PC-3 (cell line): ENCODE measurements at regions of chr6 and their contacts with region 1.

Region 1: GRCh38 chr6:32118782-32119628 is 9.0 kb downstream of the ATF6B start:
- DNase-seq: peak; percentile 83
- ATAC-seq: peak; percentile 50
- H3K4me3 ChIP-seq: no peak overlapping the region
- H3K27ac ChIP-seq: no peak overlapping the region
- H3K4me1 ChIP-seq: peaks cover 21% of the 10 kb centered on the region
- H3K27me3 ChIP-seq: no peaks in the 10 kb centered on the region
- CTCF ChIP-seq: peak; percentile 92

Region 2: DNA sequence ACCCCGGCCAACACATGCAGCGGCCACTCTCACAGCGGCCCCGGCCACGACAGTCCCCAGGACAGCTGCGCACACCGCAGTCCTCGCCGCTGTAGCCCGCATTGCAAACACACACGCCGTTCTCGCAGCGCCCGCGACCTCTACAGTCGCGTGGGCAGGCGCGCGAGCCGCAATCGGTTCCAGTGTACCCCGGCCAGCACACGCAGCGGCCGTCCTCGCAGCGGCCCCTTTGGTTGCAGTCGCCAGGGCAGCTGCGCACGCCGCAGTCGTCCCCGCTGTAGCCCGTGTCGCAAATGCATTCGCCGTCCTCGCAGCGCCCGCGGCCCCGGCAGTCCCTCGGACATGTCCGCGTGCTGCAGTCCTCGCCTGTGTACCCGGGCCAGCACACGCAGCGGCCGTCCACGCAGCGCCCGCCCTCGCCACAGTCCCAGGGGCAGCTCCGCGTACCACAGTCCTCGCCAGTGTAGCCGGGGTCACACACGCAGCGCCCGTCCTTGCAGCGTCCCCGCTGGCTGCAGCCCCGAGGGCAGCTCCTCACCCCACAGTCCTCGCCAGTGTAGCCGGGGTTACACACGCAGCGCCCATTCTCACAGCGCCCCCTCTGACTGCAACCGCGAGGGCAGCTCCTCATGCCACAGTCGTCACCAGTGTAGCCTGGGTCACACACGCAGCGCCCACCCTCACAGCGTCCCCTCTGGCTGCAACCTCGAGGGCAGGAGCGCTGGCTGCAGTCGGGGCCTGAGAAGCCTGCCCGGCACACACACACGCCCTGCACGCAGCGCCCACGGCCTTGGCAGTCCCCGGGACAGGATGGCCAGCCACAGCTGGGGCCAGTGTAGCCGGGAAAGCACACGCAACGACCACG is 22.4 kb before region 1 on chr6:
- CTCF ChIA-PET with region 1: interaction called, 10 read pairs
- POLR2A ChIA-PET with region 1: no interaction called
- intact Hi-C with region 1: no loop called
- DNase-seq: no peak
- ATAC-seq: peak; percentile 14
- H3K4me3 ChIP-seq: no peak overlapping the region
- H3K27ac ChIP-seq: no peak overlapping the region
- H3K4me1 ChIP-seq: no peaks in the 10 kb centered on the region
- H3K27me3 ChIP-seq: no peaks in the 10 kb centered on the region; the same call in 1 of the 2 replicates
- CTCF ChIP-seq: no peak

Region 3: DNA sequence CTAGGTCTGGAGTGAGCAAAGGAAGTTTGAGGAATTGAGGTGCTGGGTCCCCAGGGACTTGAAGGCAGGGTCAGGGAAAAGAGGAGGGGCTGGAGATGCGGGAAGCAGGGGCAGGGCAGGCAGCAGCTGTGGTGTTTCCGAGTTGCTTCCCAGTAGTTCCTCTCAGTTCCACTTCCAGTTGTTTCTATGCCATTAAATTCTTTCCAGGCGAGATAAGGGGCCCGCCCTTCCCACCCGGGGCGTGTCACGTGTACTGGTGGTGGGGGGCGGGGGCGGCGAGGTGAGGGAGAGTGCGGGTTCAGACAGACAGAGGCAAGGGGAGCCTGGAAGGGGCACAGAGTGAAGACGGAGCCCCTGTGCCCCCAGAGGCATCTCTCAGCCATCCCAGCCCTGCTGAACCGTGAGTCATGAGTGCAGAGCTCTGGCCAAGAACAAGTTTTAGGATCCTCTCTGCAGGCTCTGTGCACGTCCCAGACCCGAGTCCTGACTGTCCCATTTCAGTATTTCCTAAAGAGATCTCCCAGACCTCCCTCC is 10.8 kb before region 1 on chr6:
- CTCF ChIA-PET with region 1: interaction called, 13 read pairs
- POLR2A ChIA-PET with region 1: no interaction called
- intact Hi-C with region 1: no loop called
- DNase-seq: peak; percentile 58
- ATAC-seq: peak; percentile 75
- H3K4me3 ChIP-seq: no peak overlapping the region; the same call in 1 of the 2 replicates
- H3K27ac ChIP-seq: no peak overlapping the region
- H3K4me1 ChIP-seq: peaks cover 25% of the 10 kb centered on the region
- H3K27me3 ChIP-seq: no peaks in the 10 kb centered on the region
- CTCF ChIP-seq: no peak